Lower leg skin (tissue), 4 donors: ENCODE measurements at regions of chr17 and their contacts with region 1.

Region 1: DNA sequence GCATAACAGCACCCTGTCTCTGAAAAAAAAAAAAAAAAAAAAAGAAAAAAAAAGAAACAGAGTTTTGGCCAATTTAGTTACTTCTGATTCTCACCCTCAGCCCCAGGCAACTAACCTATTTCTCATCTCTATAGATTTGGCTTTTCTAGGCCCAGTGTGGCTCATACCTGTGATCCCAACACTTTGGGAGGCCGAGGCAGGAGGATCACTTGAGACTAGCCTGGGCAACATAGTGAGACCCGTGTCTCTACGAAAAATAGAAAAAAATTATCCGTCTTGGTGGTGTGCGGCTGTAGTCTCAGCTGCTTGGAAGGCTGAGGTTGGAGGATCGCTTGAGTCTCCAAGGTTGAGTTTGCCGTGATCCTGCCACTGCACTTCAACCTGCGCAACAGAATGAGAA is 8.7 kb downstream of the RPS6KB1 start:
- DNase-seq: peak in 1 of 2 donors; percentile 32
- H3K4me3 ChIP-seq: no peak overlapping the region
- CTCF ChIP-seq: no peak
- POLR2A ChIP-seq: no peak

Region 2: DNA sequence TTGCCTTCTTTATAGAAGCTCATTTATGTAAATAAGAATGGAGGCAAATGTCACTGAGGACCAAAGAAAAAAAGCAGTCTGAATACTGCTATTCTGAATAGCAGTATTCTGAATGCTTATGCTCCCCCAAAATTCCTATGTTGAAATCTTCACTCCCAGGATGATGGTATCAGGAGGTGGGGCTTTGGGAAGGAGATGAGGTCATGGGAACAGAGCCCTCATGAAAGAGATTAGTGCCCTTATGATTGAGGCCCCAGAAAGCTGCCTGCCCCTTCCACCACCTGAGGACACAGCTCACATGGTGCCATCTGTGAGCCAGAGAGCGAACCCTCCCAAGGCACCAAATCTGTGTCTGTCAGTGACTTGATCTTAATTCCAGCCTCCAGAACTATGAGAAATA is 148.3 kb after region 1 on chr17:
- intact Hi-C with region 1: loop called (anchors 10 kb)
- DNase-seq: no peak
- H3K4me3 ChIP-seq: no peak overlapping the region
- CTCF ChIP-seq: no peak
- POLR2A ChIP-seq: no peak